ENCODE measurements at regions of chr12 and their contacts with region 1.

Region 1: DNA sequence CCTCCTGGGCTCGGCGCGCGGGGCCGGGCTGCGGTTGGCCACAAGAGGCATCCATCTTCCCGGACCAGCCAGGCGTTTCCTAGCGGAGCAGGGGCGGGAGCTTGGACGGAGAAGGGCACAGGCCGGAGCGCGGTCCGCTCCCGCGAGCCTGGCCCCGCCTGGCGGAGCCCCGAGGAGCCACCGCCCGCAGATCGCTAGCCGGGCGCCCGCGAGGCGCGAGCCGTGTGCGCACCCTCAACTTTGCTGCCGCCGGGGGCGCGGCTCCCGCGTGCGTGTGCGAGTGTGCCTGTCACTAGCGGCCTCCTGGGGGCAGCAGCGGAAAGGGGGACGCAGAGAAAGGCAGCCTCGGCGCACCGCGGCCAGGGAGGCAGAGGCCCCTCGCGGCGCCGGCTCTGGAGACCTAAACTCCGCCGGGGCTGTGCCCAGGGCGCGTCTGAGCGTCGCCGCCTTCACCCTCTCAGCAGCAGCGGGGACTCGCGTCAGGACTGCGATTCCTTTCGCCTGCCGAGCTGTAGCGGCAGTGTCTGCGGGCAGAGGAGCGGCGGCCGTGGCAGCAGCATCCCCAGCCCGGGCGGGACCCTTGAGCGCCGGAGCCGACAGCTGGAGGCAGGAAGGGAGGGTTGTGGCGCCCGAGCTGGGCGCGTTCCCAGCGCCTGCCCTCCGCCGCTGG is 644 bp upstream of the SRGAP1 start:
- DNase-seq: peak; percentile 90 to 94
- ATAC-seq: peak; percentile 95 to 96 (median 96)
- H3K4me3 ChIP-seq: peak overlapping the region; percentile 80
- H3K27ac ChIP-seq: peak overlapping the region; percentile 79
- H3K4me1 ChIP-seq: no peaks in the 10 kb centered on the region
- H3K27me3 ChIP-seq: no peaks in the 10 kb centered on the region
- CTCF ChIP-seq: peak; percentile 89

Region 2: GRCh38 chr12:64088431-64089349 is 244.8 kb after region 1 on chr12:
- intact Hi-C with region 1: loop called in 1 of 2 experiments (anchors 5 kb)
- DNase-seq: peak in 1 of 2 donors; percentile 25
- ATAC-seq: peak; percentile 77 to 92 (median 88)
- H3K4me3 ChIP-seq: no peak overlapping the region
- H3K27ac ChIP-seq: peak overlapping the region; percentile 68
- H3K4me1 ChIP-seq: peaks cover 27% of the 10 kb centered on the region
- H3K27me3 ChIP-seq: no peaks in the 10 kb centered on the region
- CTCF ChIP-seq: no peak

Region 3: DNA sequence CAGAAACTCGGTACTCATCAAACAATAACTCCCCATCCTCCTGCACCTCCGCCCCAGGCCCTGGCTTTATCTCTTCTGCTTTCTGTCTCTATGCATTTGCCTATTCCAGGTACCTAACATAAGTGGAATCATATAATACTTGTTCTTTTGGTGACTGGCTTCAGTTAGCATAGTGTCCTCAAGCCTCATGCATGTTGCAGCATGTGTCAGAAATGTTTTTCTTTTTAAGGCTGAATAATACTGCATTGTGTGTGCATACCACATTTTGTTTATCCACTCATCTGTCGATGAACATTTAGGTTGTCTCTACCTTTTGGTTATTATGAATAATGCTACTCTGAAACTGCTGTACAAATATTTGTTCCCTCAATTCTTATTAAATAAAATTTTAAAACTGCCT is 261.2 kb after region 1 on chr12:
- intact Hi-C with region 1: loop called in 1 of 2 experiments (anchors 5 kb)
- DNase-seq: no peak
- ATAC-seq: no peak
- H3K4me3 ChIP-seq: no peak overlapping the region
- H3K27ac ChIP-seq: no peak overlapping the region
- H3K4me1 ChIP-seq: peaks cover 12% of the 10 kb centered on the region
- H3K27me3 ChIP-seq: no peaks in the 10 kb centered on the region
- CTCF ChIP-seq: no peak

Region 4: DNA sequence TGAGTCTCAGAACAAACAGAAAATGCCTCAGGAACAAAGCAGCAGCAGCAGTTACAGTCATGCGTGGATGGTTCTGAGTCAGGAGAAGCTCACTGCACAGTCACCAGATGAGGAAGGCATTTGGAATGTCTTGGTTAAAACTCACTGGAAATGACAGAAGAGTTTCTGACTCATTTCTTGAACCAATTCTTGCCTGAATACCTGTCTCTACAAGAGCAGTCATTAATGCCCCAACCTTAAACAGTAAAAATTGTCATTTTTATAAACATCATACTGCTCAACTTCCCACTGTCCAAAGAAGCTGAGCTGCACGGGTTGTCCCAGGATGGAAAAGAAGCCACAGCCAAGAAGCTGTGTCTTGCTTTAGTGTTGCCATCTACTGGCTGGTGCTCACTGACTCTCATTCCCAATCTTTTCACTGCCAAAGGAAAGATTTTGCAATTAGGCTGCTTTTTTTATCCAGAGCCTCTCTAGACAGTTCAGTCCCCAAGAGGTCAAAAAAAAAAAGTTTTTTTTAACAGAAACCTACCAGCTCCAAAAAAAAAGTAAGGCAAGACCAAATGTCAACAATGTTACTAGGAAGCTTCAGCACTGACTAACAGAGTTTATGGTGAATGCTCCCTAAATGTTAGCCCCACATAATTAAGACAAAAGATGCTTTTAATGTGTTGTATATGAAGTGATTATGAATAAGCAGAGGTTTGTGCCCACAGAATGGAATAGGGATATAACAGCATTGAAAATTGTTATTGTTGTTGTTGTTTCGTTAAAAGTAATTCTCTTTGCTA is 337.8 kb after region 1 on chr12:
- intact Hi-C with region 1: loop called (anchors 1 to 5 kb)
- DNase-seq: peak in 1 of 2 donors; percentile 19
- ATAC-seq: peak; percentile 84 to 94 (median 92)
- H3K4me3 ChIP-seq: no peak overlapping the region
- H3K27ac ChIP-seq: peak overlapping the region; percentile 59
- H3K4me1 ChIP-seq: peaks cover 16% of the 10 kb centered on the region
- H3K27me3 ChIP-seq: no peaks in the 10 kb centered on the region
- CTCF ChIP-seq: peak; percentile 58

Region 5: GRCh38 chr12:64256166-64256800 is 412.4 kb after region 1 on chr12:
- intact Hi-C with region 1: loop called (anchors 2 kb)
- DNase-seq: no peak
- ATAC-seq: peak in 2 of 4 donors; percentile 50 to 83
- H3K4me3 ChIP-seq: no peak overlapping the region
- H3K27ac ChIP-seq: no peak overlapping the region
- H3K4me1 ChIP-seq: no peaks in the 10 kb centered on the region
- H3K27me3 ChIP-seq: no peaks in the 10 kb centered on the region
- CTCF ChIP-seq: peak; percentile 81